Right lobe of liver (tissue), 6 donors: ENCODE measurements at regions of chr4 and their contacts with region 1.

Region 1: DNA sequence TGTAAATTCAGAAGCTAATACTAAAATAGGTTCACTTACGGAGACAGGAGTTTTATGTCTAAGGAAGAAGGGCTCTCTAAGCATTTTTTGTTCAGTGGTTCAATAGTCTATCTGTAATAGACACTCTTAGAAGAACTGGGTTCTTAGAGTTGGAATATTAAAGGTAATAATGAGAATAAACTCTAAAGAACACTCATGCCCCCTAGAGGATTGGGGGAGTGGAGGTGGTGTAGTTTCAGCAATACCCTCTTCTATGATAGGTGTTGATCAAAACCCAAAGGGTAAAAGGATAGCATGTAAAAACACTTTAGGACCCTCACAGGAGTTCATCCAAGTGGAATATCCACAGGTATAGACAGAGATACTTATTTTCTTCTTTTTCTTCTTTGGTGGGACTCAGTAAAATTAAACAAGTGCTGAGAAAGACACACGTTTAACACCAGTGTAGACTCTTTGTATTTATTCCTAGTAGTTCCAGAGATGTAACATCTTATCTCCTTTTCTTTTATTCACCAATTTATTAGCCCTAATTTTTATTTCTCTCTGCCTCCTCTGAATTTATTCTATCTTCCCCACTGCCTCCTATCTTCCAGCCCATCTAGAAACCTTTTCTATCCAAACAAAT is 25.7 kb upstream of the MND1 start:
- DNase-seq: no peak
- ATAC-seq: peak; percentile 88 to 92 (median 90)
- H3K4me3 ChIP-seq: no peak overlapping the region
- H3K27ac ChIP-seq: no peak overlapping the region
- H3K4me1 ChIP-seq: no peaks in the 10 kb centered on the region
- H3K27me3 ChIP-seq: no peaks in the 10 kb centered on the region
- CTCF ChIP-seq: peak; percentile 75 to 84 (median 80)
- POLR2A ChIP-seq: no peak

Region 2: GRCh38 chr4:153146031-153146430 is 172.8 kb before region 1 on chr4:
- intact Hi-C with region 1: loop called (anchors 5 to 10 kb)
- DNase-seq: no peak
- ATAC-seq: no peak
- H3K4me3 ChIP-seq: no peak overlapping the region
- H3K27ac ChIP-seq: no peak overlapping the region
- H3K4me1 ChIP-seq: peaks cover 0 to 8% (median 0%) of the 10 kb centered on the region in 4 donors
- H3K27me3 ChIP-seq: no peaks in the 10 kb centered on the region
- CTCF ChIP-seq: no peak
- POLR2A ChIP-seq: no peak

Region 3: GRCh38 chr4:153204247-153205027 is 114.4 kb before region 1 on chr4 and contains the start of gene TRIM2:
- intact Hi-C with region 1: loop called in 1 of 2 experiments (anchors 5 kb)
- DNase-seq: peak in 2 of 3 donors; percentile 55 to 59
- ATAC-seq: peak; percentile 72 to 89 (median 80)
- H3K4me3 ChIP-seq: peak within 1 kb of the TSS in 1 of 3 donors; percentile 12
- H3K27ac ChIP-seq: no peak within 1 kb of the TSS
- H3K4me1 ChIP-seq: peaks cover 0 to 4% (median 1%) of the 10 kb centered on the region in 4 donors
- H3K27me3 ChIP-seq: no peaks in the 10 kb centered on the region
- CTCF ChIP-seq: no peak
- POLR2A ChIP-seq: no peak
- total RNA-seq, gene TRIM2: 8.9 to 17.5 (median 10.0) TPM